ENCODE measurements at regions of chr18 and their contacts with region 1.

Region 1: GRCh38 chr18:46761059-46761769 is 4.4 kb upstream of the ST8SIA5 start:
- DNase-seq: no peak
- ATAC-seq: peak; percentile 53

Region 2: GRCh38 chr18:46220116-46220515 is 541.1 kb before region 1 on chr18:
- intact Hi-C with region 1: no loop called
- DNase-seq: no peak
- ATAC-seq: no peak

Region 3: DNA sequence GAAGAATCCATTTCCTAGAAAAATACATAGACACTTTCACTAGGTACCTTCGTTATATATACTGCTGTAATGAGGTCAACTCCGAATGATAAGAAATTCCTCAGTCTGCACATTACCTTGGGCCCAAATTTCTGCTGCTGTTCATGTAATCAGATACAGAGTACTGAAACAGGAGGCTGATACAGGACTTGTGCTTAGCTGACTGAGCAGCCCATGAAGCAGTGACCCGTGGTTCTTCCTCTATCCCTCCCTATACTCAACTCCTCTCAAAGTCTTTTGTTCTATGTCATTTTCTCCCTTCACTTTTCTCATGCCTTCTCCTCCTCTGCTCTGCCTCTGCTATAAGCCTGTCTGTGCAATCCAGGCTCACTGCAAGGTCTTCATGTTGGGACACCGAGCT is 53.2 kb after region 1 on chr18:
- intact Hi-C with region 1: loop called (anchors 10 kb)
- DNase-seq: no peak
- ATAC-seq: no peak